MCF 10A (cell line): ENCODE measurements at regions of chr13 and their contacts with region 1.

Region 1: DNA sequence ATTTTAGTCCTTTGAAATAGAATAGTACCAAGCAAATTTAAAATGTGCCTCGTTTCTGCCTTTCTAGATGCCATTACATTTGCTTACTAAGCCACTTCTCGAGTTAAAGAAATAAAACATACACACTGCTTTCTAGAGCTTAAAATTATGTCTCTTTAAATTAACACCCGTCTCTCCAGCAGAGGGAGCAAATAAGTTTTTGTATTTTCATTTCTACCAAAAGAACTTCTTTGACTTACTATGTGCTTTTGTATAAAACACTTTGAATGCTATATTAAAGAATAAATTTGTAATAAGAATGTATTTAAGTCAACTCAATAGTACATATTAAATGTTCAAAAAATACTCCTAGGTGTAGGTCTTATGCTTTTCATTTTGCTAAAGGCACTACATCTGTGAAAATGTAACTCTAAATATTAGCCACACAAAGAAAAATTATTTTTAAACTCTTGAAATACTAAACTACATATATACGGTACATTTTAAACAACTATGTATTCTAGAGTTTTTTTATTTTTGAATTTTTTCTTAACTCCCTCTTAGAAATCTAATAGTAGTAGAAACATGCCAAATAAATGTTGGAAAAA is 269.3 kb upstream of the MIR17HG start:
- DNase-seq: peak; percentile 36
- H3K4me3 Mint-ChIP-seq: no peak overlapping the region
- H3K27ac Mint-ChIP-seq: no peak overlapping the region
- H3K4me1 Mint-ChIP-seq: no peaks in the 10 kb centered on the region
- H3K27me3 Mint-ChIP-seq: peaks cover 60% of the 10 kb centered on the region
- CTCF ChIP-seq: peak; percentile 17

Region 2: GRCh38 chr13:91066745-91067144 is 11.4 kb before region 1 on chr13:
- CTCF ChIA-PET with region 1: interaction called, 16 read pairs
- POLR2A ChIA-PET with region 1: no interaction called
- intact Hi-C with region 1: no loop called
- DNase-seq: no peak
- H3K4me3 Mint-ChIP-seq: no peak overlapping the region
- H3K27ac Mint-ChIP-seq: no peak overlapping the region
- H3K4me1 Mint-ChIP-seq: no peaks in the 10 kb centered on the region
- H3K27me3 Mint-ChIP-seq: no peaks in the 10 kb centered on the region
- CTCF ChIP-seq: no peak

Region 3: GRCh38 chr13:91185294-91185863 is 107.2 kb after region 1 on chr13:
- CTCF ChIA-PET with region 1: interaction called, 7 read pairs
- POLR2A ChIA-PET with region 1: no interaction called
- intact Hi-C with region 1: loop called (anchors 1 kb)
- DNase-seq: peak; percentile 28
- H3K4me3 Mint-ChIP-seq: no peak overlapping the region
- H3K27ac Mint-ChIP-seq: no peak overlapping the region
- H3K4me1 Mint-ChIP-seq: no peaks in the 10 kb centered on the region
- H3K27me3 Mint-ChIP-seq: peaks cover 94% of the 10 kb centered on the region
- CTCF ChIP-seq: peak; percentile 37

Region 4: GRCh38 chr13:91247768-91248167 is 169.6 kb after region 1 on chr13:
- CTCF ChIA-PET with region 1: interaction called, 8 read pairs
- POLR2A ChIA-PET with region 1: no interaction called
- intact Hi-C with region 1: loop called (anchors 2 kb)
- DNase-seq: peak; percentile 6
- H3K4me3 Mint-ChIP-seq: no peak overlapping the region
- H3K27ac Mint-ChIP-seq: no peak overlapping the region
- H3K4me1 Mint-ChIP-seq: no peaks in the 10 kb centered on the region
- H3K27me3 Mint-ChIP-seq: peaks cover 78% of the 10 kb centered on the region
- CTCF ChIP-seq: peak; percentile 19